Esophagus muscularis mucosa (tissue), 4 donors: ENCODE measurements at regions of chr15 and their contacts with region 1.

Region 1: GRCh38 chr15:62782039-62782791 is 260.3 kb upstream of the TPM1 start:
- DNase-seq: no peak
- H3K4me3 ChIP-seq: no peak overlapping the region
- H3K27ac ChIP-seq: peak overlapping the region; percentile 61 to 77 (median 74)
- H3K4me1 ChIP-seq: peaks cover 19 to 29% (median 20%) of the 10 kb centered on the region in 4 donors
- H3K27me3 ChIP-seq: no peaks in the 10 kb centered on the region
- CTCF ChIP-seq: peak; percentile 70 to 87 (median 75)
- EP300 ChIP-seq: no peak
- POLR2A ChIP-seq: no peak

Region 2: GRCh38 chr15:62841269-62841628 is 59.0 kb after region 1 on chr15:
- intact Hi-C with region 1: loop called (anchors 5 kb)
- DNase-seq: no peak
- H3K4me3 ChIP-seq: no peak overlapping the region
- H3K27ac ChIP-seq: peak overlapping the region in 3 of 4 donors; percentile 63 to 71 (median 67)
- H3K4me1 ChIP-seq: peaks cover 6 to 44% (median 25%) of the 10 kb centered on the region in 4 donors
- H3K27me3 ChIP-seq: no peaks in the 10 kb centered on the region
- CTCF ChIP-seq: no peak
- EP300 ChIP-seq: no peak
- POLR2A ChIP-seq: no peak

Region 3: DNA sequence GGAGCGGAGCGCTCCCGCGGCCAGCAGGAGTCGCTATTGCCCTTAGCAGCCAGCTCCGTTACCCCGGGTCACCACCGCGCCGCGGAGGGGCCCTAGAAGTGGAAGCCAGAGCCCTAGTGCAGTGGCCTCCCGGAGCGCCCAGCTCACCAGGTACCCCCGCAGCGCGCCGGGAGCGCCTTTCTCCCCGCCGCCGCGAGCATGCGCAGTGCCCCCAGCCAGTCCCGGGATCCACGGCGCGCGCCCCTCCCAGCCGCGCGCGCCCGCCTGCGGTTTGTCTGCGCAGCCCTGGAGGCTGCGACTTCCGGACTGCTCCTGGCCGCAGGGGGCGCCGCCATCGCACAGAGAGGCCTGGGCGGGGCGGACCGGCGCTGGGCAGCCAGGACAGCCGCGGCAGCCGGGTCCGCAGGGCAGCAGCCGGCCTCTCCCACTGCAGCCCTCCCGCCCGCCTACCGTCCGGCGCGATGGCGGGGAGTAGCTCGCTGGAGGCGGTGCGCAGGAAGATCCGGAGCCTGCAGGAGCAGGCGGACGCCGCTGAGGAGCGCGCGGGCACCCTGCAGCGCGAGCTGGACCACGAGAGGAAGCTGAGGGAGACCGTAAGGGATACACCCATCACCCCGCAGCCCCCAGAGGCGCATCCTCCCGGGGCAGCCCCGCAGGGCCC is 266.0 kb after region 1 on chr15:
- intact Hi-C with region 1: loop called (anchors 10 kb)
- DNase-seq: peak; percentile 96
- H3K4me3 ChIP-seq: peak overlapping the region; percentile 70 to 91 (median 82)
- H3K27ac ChIP-seq: peak overlapping the region; percentile 93 to 97 (median 96)
- H3K4me1 ChIP-seq: peaks cover 40 to 75% (median 63%) of the 10 kb centered on the region in 4 donors
- H3K27me3 ChIP-seq: peaks cover 0 to 6% (median 0%) of the 10 kb centered on the region in 4 donors
- CTCF ChIP-seq: peak; percentile 84 to 89 (median 86)
- EP300 ChIP-seq: no peak
- POLR2A ChIP-seq: peak; percentile 20

Region 4: DNA sequence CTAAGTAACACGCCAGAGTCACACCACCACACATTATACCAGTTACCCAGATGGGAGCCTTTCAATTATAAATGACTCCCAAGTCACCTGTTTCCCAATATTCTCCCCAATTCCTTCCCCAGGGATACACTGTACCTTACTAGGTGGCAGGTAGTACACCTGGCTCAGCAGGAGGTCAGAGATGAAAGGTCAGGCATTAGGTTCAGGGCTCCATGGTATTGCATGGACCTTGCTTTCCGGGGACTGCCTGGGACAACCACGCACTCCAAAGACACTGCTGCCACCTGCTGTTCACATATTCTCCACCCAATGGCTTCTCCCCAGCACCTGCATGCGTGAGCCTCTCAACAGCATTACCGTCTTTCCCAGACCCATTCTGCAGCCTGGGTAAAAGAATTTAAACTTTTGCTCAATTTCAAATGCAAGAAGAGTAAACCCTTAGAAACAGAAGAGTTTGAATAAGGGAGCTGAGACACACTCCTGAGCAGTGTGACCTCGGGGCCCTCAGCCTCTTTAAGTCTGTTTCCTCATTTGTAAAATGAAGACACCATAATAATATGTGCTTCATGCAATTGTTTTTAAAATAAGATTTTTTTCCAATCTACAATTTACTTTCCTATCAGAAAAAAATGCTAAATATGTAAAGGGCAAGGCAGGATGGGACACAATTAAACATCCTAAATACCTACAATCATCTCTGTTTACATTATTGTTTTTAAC is 311.4 kb after region 1 on chr15:
- intact Hi-C with region 1: loop called (anchors 5 kb)
- DNase-seq: peak; percentile 95
- H3K4me3 ChIP-seq: no peak overlapping the region
- H3K27ac ChIP-seq: peak overlapping the region; percentile 64 to 76 (median 67)
- H3K4me1 ChIP-seq: peaks cover 21 to 36% (median 34%) of the 10 kb centered on the region in 4 donors
- H3K27me3 ChIP-seq: no peaks in the 10 kb centered on the region
- CTCF ChIP-seq: peak; percentile 90 to 93 (median 91)
- EP300 ChIP-seq: no peak
- POLR2A ChIP-seq: no peak

Region 5: DNA sequence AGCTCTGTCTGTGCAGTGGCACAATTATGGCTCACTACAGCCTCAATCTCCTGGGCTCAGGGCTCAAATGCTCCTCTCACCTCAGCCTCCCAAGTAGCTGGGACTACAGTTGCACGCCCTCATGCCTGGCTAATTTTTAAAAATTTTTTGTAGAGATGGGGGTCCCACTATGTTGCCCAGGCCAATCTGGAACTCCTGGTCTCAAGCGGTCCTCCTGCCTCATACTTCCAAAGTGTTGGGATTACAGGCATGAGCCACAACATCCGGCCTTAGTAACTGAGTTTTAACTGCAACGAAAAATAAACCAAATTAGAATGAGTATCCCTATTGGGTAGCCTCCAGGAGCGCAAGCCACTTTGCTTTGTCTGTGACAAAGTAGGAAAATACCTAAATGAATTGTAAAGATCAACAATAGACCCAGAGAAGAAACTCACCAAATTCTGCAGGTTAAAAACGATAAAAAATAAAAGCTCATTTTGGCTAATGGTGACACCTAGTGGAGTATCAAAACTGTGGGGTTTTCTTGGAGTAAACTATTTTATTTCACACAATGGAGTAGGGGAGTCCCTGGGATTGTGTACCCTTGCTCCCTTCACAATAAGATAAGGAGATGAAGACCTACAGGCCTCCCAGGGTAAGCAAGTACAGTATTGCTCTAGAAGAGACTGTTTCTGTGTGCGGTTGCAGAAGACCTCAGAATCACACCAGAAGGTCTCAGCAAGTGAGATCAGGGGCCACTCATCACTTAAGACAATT is 620.5 kb after region 1 on chr15:
- intact Hi-C with region 1: loop called (anchors 10 kb)
- DNase-seq: no peak
- H3K4me3 ChIP-seq: peak overlapping the region in 2 of 4 donors; percentile 12 to 18
- H3K27ac ChIP-seq: no peak overlapping the region
- H3K4me1 ChIP-seq: peaks cover 0 to 8% (median 5%) of the 10 kb centered on the region in 4 donors
- H3K27me3 ChIP-seq: no peaks in the 10 kb centered on the region
- CTCF ChIP-seq: peak; percentile 70 to 75 (median 72)
- EP300 ChIP-seq: no peak
- POLR2A ChIP-seq: no peak